ENCODE measurements at regions of chr9 and their contacts with region 1.

Region 1: GRCh38 chr9:13383216-13383615 is 103.7 kb upstream of the MPDZ start:
- DNase-seq: no peak
- ATAC-seq: no peak
- H3K4me3 ChIP-seq: no peak overlapping the region
- H3K27ac ChIP-seq: no peak overlapping the region
- H3K4me1 ChIP-seq: no peaks in the 10 kb centered on the region
- H3K27me3 ChIP-seq: no peaks in the 10 kb centered on the region
- CTCF ChIP-seq: no peak
- POLR2A ChIP-seq: no peak
- RAD21 ChIP-seq: no peak

Region 2: GRCh38 chr9:12702160-12702758 is 681.0 kb before region 1 on chr9:
- CTCF ChIA-PET with region 1: no interaction called
- POLR2A ChIA-PET with region 1: no interaction called
- dilution Hi-C with region 1: no loop called
- in situ Hi-C with region 1: no loop called
- intact Hi-C with region 1: no loop called
- DNase-seq: peak; percentile 70
- ATAC-seq: peak; percentile 87
- H3K4me3 ChIP-seq: no peak overlapping the region
- H3K27ac ChIP-seq: no peak overlapping the region
- H3K4me1 ChIP-seq: no peaks in the 10 kb centered on the region; the same call in none of the 2 replicates
- H3K27me3 ChIP-seq: no peaks in the 10 kb centered on the region
- CTCF ChIP-seq: peak; percentile 76
- POLR2A ChIP-seq: no peak
- RAD21 ChIP-seq: peak; percentile 80

Region 3: DNA sequence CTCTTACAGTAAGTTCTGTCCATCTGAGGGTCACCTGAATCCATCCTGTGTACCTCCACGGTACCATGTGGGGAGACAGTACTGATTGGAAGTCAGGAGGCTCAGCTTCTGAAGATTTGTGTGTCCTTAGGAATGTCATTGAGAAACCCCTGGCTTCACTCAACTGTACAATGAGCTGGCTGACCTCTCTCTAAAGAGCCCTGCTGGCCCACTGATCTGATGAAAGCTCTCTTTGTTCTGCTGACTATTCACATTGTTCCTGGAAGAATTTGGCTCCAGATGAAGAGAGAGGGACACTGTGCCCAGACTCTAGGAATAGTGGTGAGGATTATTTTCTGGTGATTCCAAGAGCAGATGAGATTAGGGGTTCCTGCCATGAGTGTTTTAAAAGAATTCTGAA is 467.2 kb before region 1 on chr9:
- CTCF ChIA-PET with region 1: no interaction called
- POLR2A ChIA-PET with region 1: no interaction called
- dilution Hi-C with region 1: no loop called
- in situ Hi-C with region 1: no loop called
- intact Hi-C with region 1: no loop called
- DNase-seq: peak; percentile 19
- ATAC-seq: no peak
- H3K4me3 ChIP-seq: no peak overlapping the region
- H3K27ac ChIP-seq: no peak overlapping the region
- H3K4me1 ChIP-seq: no peaks in the 10 kb centered on the region
- H3K27me3 ChIP-seq: no peaks in the 10 kb centered on the region
- CTCF ChIP-seq: no peak
- POLR2A ChIP-seq: no peak
- RAD21 ChIP-seq: no peak

Region 4: DNA sequence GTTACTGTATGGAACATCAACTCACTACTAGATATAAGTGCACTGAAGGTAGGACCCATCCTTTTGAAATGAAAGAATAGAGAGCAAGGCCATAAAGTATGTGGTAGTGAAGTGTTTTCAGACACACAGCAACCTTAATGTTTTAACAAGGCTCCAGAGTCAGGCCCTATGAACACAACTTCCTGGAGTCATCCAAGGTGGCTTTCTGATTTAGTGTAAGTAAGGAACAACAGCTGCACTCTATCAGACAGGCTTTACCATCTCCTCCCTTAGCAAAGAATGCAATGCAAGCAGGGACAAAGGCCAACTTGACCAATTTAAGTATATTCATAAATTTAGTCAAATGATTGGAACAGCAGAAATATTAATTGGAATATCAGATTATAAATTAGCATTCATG is 193.9 kb before region 1 on chr9:
- CTCF ChIA-PET with region 1: no interaction called
- POLR2A ChIA-PET with region 1: no interaction called
- dilution Hi-C with region 1: no loop called
- in situ Hi-C with region 1: no loop called
- intact Hi-C with region 1: no loop called
- DNase-seq: no peak
- ATAC-seq: no peak
- H3K4me3 ChIP-seq: no peak overlapping the region
- H3K27ac ChIP-seq: no peak overlapping the region
- H3K4me1 ChIP-seq: no peaks in the 10 kb centered on the region
- H3K27me3 ChIP-seq: no peaks in the 10 kb centered on the region
- CTCF ChIP-seq: no peak
- POLR2A ChIP-seq: no peak
- RAD21 ChIP-seq: no peak

Region 5: GRCh38 chr9:13372510-13372909 is 10.7 kb before region 1 on chr9:
- CTCF ChIA-PET with region 1: no interaction called
- POLR2A ChIA-PET with region 1: interaction called, 13 read pairs
- dilution Hi-C with region 1: no loop called
- in situ Hi-C with region 1: no loop called
- intact Hi-C with region 1: no loop called
- DNase-seq: no peak
- ATAC-seq: no peak
- H3K4me3 ChIP-seq: no peak overlapping the region
- H3K27ac ChIP-seq: no peak overlapping the region
- H3K4me1 ChIP-seq: no peaks in the 10 kb centered on the region
- H3K27me3 ChIP-seq: peaks cover 9% of the 10 kb centered on the region; the same call in 1 of the 2 replicates
- CTCF ChIP-seq: no peak
- POLR2A ChIP-seq: no peak
- RAD21 ChIP-seq: no peak

Measured in IMR-90 (cell line).